Activated CD8-positive, alpha-beta T cell treated with anti-CD3 and anti-CD28 coated beads for 36 hours (primary cell): ENCODE measurements at regions of chr22 and their contacts with region 1.

Region 1: DNA sequence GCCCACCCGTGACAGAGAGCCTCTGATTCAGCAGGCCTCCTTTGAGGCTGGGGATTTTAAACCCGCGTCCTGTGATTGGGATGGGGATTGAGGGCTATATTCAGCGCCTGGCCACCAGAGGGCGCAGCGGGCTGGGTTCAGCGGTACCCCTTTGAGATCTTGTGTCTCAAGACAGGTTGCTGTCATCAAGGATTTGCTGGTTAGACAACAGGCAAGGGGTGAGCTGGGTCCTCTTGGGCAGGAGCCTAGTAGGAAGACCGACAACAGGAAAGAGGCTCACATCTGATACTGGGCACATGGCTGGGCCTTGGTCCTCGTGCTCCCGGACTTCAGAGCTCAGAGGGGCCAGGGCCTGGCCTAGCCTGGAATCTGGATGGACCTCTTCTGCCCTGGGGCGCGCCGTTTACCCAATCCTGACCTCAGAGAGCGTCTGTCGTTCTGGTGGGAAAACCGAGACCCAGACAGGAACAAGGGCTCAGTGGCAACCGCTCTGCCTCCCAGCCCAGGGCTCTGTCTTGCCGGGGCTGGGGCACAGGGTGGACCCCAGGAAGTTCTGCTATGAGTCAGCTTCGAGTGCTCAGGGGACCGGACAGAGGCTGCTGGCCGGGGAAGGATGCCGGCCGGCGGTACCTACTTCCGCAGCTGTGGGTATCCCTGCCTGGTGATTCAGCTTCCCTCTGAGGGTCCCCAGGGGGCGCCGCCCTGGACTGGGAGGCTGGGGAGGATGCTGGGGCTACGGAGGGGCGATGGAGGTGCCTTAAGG is 929 bp upstream of the SLC35E4 start:
- DNase-seq: peak; percentile 93
- ATAC-seq: peak; percentile 67
- H3K4me3 Mint-ChIP-seq: peak overlapping the region; percentile 78
- H3K27ac Mint-ChIP-seq: peak overlapping the region; percentile 90
- H3K4me1 Mint-ChIP-seq: peaks cover 21% of the 10 kb centered on the region
- H3K27me3 Mint-ChIP-seq: no peaks in the 10 kb centered on the region
- CTCF ChIP-seq: peak; percentile 94

Region 2: DNA sequence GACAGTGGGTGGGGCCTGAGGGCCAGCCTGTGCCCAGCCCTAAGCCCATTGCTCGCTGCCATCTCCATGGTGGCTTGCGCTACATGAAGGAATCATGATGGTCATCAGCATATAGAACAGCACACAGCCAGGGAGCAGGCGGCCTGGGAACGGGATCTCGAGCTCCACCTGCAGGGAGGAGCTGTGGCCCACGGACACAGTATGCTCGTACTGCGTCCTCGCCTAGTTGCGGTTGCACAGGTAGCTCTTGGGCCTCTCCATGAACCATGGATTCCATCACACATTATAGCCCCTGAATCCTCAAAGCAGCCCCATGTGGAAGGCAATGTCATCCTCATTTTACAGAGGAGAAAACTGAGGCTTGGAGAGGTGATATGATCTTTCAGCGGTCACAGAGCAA is 144.3 kb before region 1 on chr22:
- CTCF ChIA-PET with region 1: no interaction called
- POLR2A ChIA-PET with region 1: no interaction called
- intact Hi-C with region 1: no loop called
- DNase-seq: no peak
- ATAC-seq: no peak
- H3K4me3 Mint-ChIP-seq: no peak overlapping the region
- H3K27ac Mint-ChIP-seq: no peak overlapping the region
- H3K4me1 Mint-ChIP-seq: no peaks in the 10 kb centered on the region
- H3K27me3 Mint-ChIP-seq: peaks cover 5% of the 10 kb centered on the region
- CTCF ChIP-seq: no peak

Region 3: GRCh38 chr22:30541961-30542810 is 92.5 kb before region 1 on chr22:
- CTCF ChIA-PET with region 1: no interaction called
- POLR2A ChIA-PET with region 1: no interaction called
- intact Hi-C with region 1: no loop called
- DNase-seq: no peak
- ATAC-seq: no peak
- H3K4me3 Mint-ChIP-seq: no peak overlapping the region
- H3K27ac Mint-ChIP-seq: no peak overlapping the region
- H3K4me1 Mint-ChIP-seq: peaks cover 4% of the 10 kb centered on the region
- H3K27me3 Mint-ChIP-seq: peaks cover 26% of the 10 kb centered on the region
- CTCF ChIP-seq: no peak

Region 4: GRCh38 chr22:30606455-30607299 is 28.0 kb before region 1 on chr22 and contains the start of gene TCN2:
- CTCF ChIA-PET with region 1: interaction called, 19 read pairs
- POLR2A ChIA-PET with region 1: interaction called, 4 read pairs
- intact Hi-C with region 1: no loop called
- DNase-seq: peak; percentile 75
- ATAC-seq: peak; percentile 81
- H3K4me3 Mint-ChIP-seq: peak within 1 kb of the TSS; percentile 59
- H3K27ac Mint-ChIP-seq: peak within 1 kb of the TSS; percentile 45
- H3K4me1 Mint-ChIP-seq: peaks cover 25% of the 10 kb centered on the region
- H3K27me3 Mint-ChIP-seq: no peaks in the 10 kb centered on the region
- CTCF ChIP-seq: no peak
- total RNA-seq, gene TCN2: 0.16 TPM in 1 of 2 experiments, not detected in the other

Region 5: GRCh38 chr22:30667494-30668385 is 33.1 kb after region 1 on chr22 and contains the start of gene DUSP18:
- CTCF ChIA-PET with region 1: interaction called, 10 read pairs
- POLR2A ChIA-PET with region 1: interaction called, 3 read pairs
- intact Hi-C with region 1: no loop called
- DNase-seq: peak; percentile 94
- ATAC-seq: peak; percentile 96
- H3K4me3 Mint-ChIP-seq: peak within 1 kb of the TSS; percentile 84
- H3K27ac Mint-ChIP-seq: peak within 1 kb of the TSS; percentile 80
- H3K4me1 Mint-ChIP-seq: peaks cover 19% of the 10 kb centered on the region
- H3K27me3 Mint-ChIP-seq: peaks cover 2% of the 10 kb centered on the region
- CTCF ChIP-seq: no peak
- total RNA-seq, gene DUSP18: 4.1 to 4.4 TPM

Region 6: GRCh38 chr22:30742291-30743256 is 107.9 kb after region 1 on chr22:
- CTCF ChIA-PET with region 1: interaction called, 19 read pairs
- POLR2A ChIA-PET with region 1: interaction called, 6 read pairs
- intact Hi-C with region 1: no loop called
- DNase-seq: peak; percentile 47
- ATAC-seq: peak; percentile 43
- H3K4me3 Mint-ChIP-seq: no peak overlapping the region
- H3K27ac Mint-ChIP-seq: peak overlapping the region; percentile 86
- H3K4me1 Mint-ChIP-seq: peaks cover 43% of the 10 kb centered on the region
- H3K27me3 Mint-ChIP-seq: peaks cover 4% of the 10 kb centered on the region
- CTCF ChIP-seq: no peak

Region 7: DNA sequence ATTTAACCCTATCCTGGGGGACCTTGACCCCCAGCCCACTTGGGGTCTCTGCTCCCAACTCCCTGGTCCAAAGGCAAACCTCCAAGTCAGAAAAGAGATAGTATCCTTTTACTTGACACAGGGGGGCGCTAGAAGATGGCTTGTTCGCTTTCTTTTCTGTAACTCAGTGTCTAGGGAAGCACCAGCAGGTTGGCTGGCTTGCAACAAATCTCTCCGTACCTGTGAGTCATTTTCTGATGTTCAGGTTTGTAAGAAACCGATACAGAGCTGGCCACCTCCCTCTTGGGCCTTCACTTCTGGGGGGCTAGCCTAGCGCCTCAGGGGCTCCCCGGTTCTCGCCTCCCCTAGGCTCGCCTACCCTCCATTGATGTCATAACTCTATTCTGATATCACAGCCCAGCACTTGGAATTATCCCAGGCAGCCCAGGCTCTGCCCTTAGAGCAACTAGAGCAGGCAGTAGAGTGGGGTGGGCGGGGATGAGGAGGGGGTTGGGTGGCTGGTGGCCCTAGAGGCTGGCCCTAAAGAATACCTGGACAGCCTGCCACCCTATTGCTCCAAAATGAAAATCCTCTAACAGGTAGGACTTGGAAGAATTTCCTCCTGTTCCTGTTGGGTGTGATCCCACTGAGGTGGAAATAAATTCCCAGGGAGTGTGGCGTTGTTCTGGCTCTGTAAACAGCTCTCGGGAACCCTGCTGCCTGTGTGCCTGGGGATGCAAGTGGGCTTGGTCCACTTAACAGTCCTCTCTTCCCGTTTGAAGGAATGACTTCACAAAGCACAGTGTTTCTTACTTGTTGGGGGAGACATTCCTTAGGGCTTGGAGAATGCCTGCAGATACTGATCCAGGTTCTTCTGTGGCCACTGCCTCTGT is 129.4 kb after region 1 on chr22:
- CTCF ChIA-PET with region 1: interaction called, 25 read pairs
- POLR2A ChIA-PET with region 1: no interaction called
- intact Hi-C with region 1: no loop called
- DNase-seq: peak; percentile 75
- ATAC-seq: peak; percentile 97
- H3K4me3 Mint-ChIP-seq: no peak overlapping the region
- H3K27ac Mint-ChIP-seq: no peak overlapping the region
- H3K4me1 Mint-ChIP-seq: peaks cover 2% of the 10 kb centered on the region
- H3K27me3 Mint-ChIP-seq: no peaks in the 10 kb centered on the region
- CTCF ChIP-seq: peak; percentile 83

Region 8: GRCh38 chr22:30774566-30774965 is 139.9 kb after region 1 on chr22:
- CTCF ChIA-PET with region 1: no interaction called
- POLR2A ChIA-PET with region 1: no interaction called
- intact Hi-C with region 1: no loop called
- DNase-seq: no peak
- ATAC-seq: no peak
- H3K4me3 Mint-ChIP-seq: no peak overlapping the region
- H3K27ac Mint-ChIP-seq: no peak overlapping the region
- H3K4me1 Mint-ChIP-seq: no peaks in the 10 kb centered on the region
- H3K27me3 Mint-ChIP-seq: no peaks in the 10 kb centered on the region
- CTCF ChIP-seq: no peak